ENCODE measurements at regions of chr16 and their contacts with region 1.

Region 1: GRCh38 chr16:56767024-56767423 is 37.1 kb downstream of the NUP93 start:
- DNase-seq: no peak
- H3K4me3 ChIP-seq: no peak overlapping the region
- H3K27ac ChIP-seq: no peak overlapping the region
- H3K4me1 ChIP-seq: no peaks in the 10 kb centered on the region
- H3K27me3 ChIP-seq: no peaks in the 10 kb centered on the region
- CTCF ChIP-seq: no peak
- POLR2A ChIP-seq: no peak

Region 2: DNA sequence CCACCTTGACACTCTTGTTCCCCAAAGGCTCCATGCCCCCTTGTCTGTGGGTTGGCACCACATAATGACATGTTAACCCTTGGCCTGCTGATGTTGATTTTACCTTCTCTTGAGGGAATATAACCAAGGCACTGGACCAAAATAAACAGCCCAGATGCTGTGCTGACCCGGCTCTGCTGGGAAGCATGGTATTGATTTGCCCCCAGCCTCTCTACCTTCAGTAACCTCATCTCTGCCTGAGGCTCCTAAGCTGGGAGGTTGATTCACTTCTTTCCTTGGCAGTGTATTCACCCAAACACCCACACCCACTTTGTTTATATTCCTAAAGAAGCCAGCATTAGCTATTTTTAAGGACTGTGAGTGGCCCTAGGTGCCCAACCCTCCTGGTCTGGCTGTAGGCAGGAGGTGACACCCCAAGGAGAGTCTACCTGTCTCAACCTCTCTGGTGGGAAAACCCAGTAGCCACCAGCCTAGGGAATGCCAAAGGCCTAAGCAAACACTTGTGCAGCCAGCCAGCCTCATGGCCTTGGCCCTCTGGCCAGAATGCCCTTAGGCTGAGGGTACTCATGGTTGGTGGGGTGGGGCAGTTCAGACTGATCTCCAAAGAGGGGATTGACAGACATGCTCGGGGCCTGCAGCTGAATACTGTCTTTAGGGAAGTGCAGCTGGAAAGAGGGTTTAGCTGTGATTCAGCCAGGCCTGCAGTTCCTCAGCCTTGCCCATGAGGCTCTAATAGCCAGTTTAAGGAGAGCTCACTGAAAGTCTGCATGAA is 533.0 kb before region 1 on chr16:
- intact Hi-C with region 1: loop called (anchors 5 kb)
- DNase-seq: no peak
- H3K4me3 ChIP-seq: no peak overlapping the region
- H3K27ac ChIP-seq: no peak overlapping the region
- H3K4me1 ChIP-seq: no peaks in the 10 kb centered on the region
- H3K27me3 ChIP-seq: no peaks in the 10 kb centered on the region
- CTCF ChIP-seq: no peak
- POLR2A ChIP-seq: no peak